Cardiac septum (tissue), 1 donor: ENCODE measurements at regions of chr16 and their contacts with region 1.

Region 1: DNA sequence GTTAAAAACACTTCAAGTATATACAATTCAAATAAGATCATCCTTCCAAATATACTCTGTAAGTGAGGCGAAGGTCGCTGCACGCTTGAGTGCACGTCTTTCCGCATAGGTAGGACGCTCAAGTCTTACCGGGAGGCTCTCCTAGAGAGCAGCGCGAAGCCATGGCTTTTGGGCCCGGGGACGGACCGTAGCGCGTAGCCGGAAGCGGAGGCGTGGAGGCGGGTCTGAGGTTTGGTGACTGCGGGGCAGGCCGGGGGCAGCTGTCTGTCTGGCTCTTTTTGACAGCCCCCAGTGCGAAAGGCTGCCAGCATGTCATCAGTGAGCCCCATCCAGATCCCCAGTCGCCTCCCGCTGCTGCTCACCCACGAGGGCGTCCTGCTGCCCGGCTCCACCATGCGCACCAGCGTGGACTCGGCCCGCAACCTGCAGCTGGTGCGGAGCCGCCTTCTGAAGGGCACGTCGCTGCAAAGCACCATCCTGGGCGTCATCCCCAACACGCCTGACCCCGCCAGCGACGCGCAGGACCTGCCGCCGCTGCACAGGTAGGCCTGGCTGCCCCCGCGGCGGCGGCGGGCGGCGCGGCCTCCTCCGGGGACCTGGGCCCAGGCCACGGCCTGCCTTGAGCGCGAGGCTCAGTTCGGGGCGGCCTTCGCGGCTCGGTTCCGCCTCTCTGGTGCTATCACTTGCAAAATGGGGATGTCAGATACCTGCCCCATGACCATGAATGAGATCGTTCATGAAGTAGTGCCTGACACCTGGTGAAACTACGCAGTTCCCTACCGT is at the start of gene LONP2:
- DNase-seq: peak; percentile 97
- total RNA-seq, gene LONP2: 68.1 TPM

Region 2: DNA sequence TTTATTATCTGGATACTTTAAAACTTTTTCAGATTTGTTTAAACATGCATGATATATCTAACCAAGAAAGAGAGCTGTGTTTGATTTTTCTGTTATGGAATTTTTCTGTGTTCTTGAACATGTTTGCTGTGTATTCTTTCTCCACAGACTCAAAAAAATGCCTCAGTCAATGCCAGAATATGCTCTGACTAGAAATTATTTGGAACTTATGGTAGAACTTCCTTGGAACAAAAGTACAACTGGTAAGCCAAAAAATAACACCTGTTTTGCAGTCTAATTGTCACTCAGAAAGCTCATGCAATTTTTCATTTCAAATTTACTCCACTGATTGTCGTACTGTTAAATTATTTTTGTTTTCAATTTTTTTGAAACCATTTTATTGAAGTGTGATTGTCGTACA is 18.4 kb after region 1 on chr16:
- intact Hi-C with region 1: no loop called
- DNase-seq: no peak

Region 3: GRCh38 chr16:49281843-49282642 is 1037.8 kb after region 1 on chr16:
- intact Hi-C with region 1: loop called (anchors 5 kb)
- DNase-seq: peak; percentile 91